ENCODE measurements at regions of chr9 and their contacts with region 1.

Region 1: DNA sequence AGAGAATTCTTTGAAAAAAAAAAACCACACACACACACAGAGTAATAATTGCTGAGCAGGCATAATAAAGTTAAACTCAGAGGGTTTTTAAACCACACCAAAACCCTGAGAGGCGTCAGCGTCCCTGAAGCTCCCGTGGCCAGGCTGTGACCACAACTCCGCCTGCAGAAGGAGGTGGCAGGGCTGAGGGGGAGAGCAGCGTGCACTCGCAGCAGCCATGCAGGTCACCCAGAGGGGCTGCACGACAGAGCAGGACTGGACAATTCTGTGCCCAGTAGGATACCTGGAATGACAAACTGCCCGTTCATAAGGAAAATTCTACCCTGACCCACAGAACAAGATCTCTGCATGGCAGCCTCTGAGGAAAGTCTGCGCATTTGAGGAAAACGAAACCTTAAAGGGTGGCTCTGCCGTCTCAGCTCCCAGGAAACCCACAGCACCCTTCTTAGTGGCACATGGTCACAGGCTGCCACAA is 44.0 kb downstream of the ROR2 start:
- DNase-seq: peak; percentile 91
- H3K4me3 Mint-ChIP-seq: no peak overlapping the region
- H3K27ac Mint-ChIP-seq: peak overlapping the region; percentile 43
- H3K4me1 Mint-ChIP-seq: peaks cover 37% of the 10 kb centered on the region
- H3K27me3 Mint-ChIP-seq: peaks cover 4% of the 10 kb centered on the region

Region 2: GRCh38 chr9:91949946-91950664 is 44.1 kb after region 1 on chr9 and contains the start of gene ROR2:
- intact Hi-C with region 1: loop called (anchors 2 kb)
- DNase-seq: peak; percentile 93
- H3K4me3 Mint-ChIP-seq: peak within 1 kb of the TSS; percentile 80
- H3K27ac Mint-ChIP-seq: no peak within 1 kb of the TSS
- H3K4me1 Mint-ChIP-seq: peaks cover 8% of the 10 kb centered on the region
- H3K27me3 Mint-ChIP-seq: peaks cover 68% of the 10 kb centered on the region
- total RNA-seq, gene ROR2: 0.40 and 0.43 TPM in 2 replicates

Measured in activated CD4-positive, alpha-beta T cell treated with anti-CD3 and anti-CD28 coated beads, Interleukin-2, amount 10 ng/mL, durations not matched to agents 24 days and 14 days (primary cell).